Right ventricle myocardium inferior (tissue), 1 donor: ENCODE measurements at regions of chr12 and their contacts with region 1.

Region 1: GRCh38 chr12:13100882-13101769 is 2.3 kb downstream of the GSG1 start:
- DNase-seq: peak; percentile 97
- ATAC-seq: peak; percentile 88

Region 2: GRCh38 chr12:11408096-11408495 is 1693.0 kb before region 1 on chr12:
- intact Hi-C with region 1: no loop called
- DNase-seq: no peak
- ATAC-seq: no peak

Region 3: DNA sequence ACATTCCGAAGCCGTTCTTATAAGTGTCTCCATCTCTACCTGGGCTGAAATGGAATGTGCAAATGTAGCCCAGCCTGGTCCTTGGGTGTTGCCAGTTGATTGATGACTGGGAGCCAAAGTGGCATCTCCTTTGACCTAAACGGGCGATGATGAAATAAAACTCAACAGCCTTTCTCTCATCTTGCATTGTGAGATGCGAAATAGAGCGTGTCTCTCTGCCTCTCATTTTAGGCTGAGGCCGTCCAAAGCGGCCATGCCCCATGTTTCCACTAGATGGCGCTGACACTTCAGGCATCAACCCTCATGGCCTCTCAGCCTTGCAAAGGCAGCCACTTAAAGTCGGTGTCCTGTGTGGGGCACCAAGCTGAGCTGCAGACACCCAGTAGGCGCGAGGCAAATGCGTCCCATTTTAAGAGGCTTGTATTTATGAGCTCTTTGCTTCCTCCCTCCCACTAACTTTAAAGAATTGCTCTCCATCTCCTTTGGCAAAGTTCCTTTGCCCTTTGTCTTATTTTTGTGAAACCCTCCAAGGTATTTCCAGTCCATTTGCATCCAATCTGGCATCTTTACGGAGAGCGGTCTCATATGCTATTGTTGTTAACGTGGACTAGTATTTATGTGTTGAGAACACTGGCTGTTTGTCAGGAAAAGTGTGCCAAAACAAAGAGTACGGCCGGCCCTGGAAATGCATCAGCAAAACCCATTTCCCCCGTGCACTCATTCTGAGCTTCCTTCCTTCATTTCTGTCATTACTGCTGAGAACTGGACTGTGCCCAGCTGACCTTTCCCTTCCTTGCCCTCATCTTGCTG is 184.8 kb before region 1 on chr12:
- intact Hi-C with region 1: loop called (anchors 5 kb)
- DNase-seq: peak; percentile 91
- ATAC-seq: peak; percentile 96

Region 4: DNA sequence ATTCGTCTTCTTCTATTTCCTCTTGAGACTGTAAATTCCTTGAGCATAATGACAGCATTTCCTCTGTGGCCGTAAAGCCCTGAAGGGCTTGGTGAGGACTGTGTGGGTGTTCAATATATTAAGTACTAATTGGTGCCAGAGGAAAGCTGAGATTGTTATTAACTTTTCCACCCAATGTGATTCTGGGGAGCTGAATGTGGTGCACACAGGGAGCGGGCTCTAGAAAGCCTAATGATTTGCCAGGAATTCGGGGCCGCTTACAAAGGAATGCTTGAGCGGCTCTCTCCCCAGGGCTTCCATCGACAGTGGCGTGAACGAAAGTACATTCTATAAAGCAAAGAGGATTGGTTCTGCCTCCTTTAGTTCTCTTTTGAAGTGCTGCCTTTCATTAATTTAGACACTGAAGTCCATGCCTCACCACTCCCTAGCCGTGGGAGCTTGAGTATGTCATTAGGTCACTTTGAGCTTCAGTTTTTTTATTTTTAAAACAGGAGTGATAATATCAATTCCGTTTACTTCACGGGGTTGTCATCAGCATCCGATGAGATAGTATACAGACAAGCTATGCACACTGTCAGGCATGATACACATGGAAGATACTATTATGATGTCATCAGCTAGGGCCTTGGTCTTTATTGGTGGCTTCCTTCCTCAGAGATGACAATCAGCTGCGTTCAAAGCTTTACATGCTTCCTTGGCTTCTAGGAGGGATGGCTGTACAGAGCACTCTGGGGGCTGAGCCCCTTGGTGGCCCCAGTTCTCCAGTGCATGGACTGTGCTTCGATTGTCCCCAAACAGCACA is 13.3 kb after region 1 on chr12:
- intact Hi-C with region 1: loop called (anchors 2 kb)
- DNase-seq: no peak
- ATAC-seq: no peak

Region 5: GRCh38 chr12:13152281-13152680 is 51.2 kb after region 1 on chr12:
- intact Hi-C with region 1: loop called (anchors 2 kb)
- DNase-seq: peak; percentile 77
- ATAC-seq: peak; percentile 85

Region 6: DNA sequence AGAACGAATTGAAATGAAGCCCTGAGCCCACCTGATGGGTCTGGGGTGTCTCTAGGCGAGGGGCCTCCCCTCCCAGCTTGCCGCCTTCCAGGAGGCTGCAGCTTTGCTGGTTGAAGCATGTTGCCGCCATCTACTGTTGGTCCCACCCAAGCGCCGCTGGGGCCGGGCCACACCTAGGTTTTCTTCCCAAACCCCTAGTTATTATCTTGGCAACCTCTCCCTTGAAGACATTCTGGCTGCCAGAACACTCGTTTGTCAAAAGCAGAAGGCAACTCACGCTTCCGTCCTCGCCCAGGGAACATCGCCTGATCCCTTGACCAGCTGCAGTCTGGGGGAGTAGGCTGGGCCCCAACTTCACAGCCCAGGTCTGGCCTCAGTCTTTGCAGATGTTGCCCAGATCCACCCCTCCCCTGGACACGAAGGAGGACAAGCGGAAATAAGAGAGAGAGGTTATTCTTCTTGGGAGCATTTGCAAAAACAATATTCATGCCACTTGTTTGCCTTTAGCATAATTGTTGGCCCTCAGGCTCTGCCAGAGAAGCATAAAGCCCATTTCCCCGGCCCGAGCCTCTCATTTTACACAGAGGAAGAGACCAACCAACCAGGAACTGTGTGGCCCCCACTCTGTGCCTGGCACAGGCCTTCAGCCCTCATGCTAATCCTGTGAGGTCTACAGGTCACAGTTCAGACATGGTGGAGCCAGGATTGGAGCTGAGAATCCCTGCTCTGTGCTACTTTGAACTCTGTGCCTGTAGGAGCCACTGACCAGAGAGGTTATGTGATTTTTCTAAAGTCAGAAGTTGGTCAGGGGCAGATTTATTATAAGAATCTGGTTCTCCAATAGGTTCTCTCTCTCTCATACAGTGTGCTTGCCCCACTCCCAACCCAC is 102.2 kb after region 1 on chr12:
- intact Hi-C with region 1: loop called (anchors 2 kb)
- DNase-seq: peak; percentile 83
- ATAC-seq: peak; percentile 71